HCT116 (cell line): ENCODE measurements at regions of chr17 and their contacts with region 1.

Region 1: GRCh38 chr17:43316522-43317142 is 82.2 kb upstream of the ARL4D start:
- DNase-seq: no peak
- ATAC-seq: no peak
- H3K4me3 ChIP-seq: no peak overlapping the region
- H3K27ac ChIP-seq: no peak overlapping the region
- H3K4me1 ChIP-seq: no peaks in the 10 kb centered on the region; a peak in 3 of 4 replicates
- H3K27me3 ChIP-seq: no peaks in the 10 kb centered on the region
- CTCF ChIP-seq: no peak
- POLR2A ChIP-seq: no peak
- RAD21 ChIP-seq: no peak

Region 2: GRCh38 chr17:43024407-43025289 is 292.0 kb before region 1 on chr17 and contains the start of gene RND2:
- CTCF ChIA-PET with region 1: interaction called, 4 read pairs
- POLR2A ChIA-PET with region 1: interaction called, 30 read pairs
- RAD21 ChIA-PET with region 1: no interaction called
- intact Hi-C with region 1: no loop called
- DNase-seq: peak; percentile 91
- ATAC-seq: peak; percentile 72
- H3K4me3 ChIP-seq: peak within 1 kb of the TSS; percentile 45 to 61
- H3K27ac ChIP-seq: peak within 1 kb of the TSS; percentile 63
- H3K4me1 ChIP-seq: peaks cover 9 to 38% of the 10 kb centered on the region in 2 experiments; a peak in 3 of 4 replicates
- H3K27me3 ChIP-seq: no peaks in the 10 kb centered on the region
- CTCF ChIP-seq: peak in 2 of 3 experiments; percentile 63 to 75; a peak in 5 of 6 replicates
- POLR2A ChIP-seq: no peak
- RAD21 ChIP-seq: peak; percentile 87
- total RNA-seq, gene RND2: 0.66 TPM

Region 3: DNA sequence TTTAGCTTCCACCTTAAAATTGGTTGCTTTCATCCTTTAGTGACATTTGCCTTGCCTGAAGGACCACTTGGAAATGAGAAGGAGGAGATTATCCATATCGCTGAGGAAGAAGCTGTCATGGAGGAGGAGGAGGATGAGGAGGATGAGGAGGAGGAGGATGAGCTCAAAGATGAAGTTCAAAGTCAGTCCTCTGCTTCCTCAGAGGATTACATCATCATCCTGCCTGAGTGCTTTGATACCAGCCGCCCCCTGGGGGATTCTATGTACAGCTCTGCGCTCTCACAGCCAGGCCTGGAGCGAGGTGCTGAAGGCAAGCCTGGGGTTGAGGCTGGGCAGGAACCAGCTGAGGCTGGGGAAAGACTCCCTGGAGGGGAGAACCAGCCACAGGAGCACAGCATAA is 116.5 kb before region 1 on chr17:
- CTCF ChIA-PET with region 1: no interaction called
- POLR2A ChIA-PET with region 1: interaction called, 12 read pairs
- RAD21 ChIA-PET with region 1: no interaction called
- intact Hi-C with region 1: no loop called
- DNase-seq: no peak
- ATAC-seq: no peak
- H3K4me3 ChIP-seq: no peak overlapping the region
- H3K27ac ChIP-seq: no peak overlapping the region
- H3K4me1 ChIP-seq: no peaks in the 10 kb centered on the region
- H3K27me3 ChIP-seq: no peaks in the 10 kb centered on the region
- CTCF ChIP-seq: no peak
- POLR2A ChIP-seq: no peak
- RAD21 ChIP-seq: no peak

Region 4: DNA sequence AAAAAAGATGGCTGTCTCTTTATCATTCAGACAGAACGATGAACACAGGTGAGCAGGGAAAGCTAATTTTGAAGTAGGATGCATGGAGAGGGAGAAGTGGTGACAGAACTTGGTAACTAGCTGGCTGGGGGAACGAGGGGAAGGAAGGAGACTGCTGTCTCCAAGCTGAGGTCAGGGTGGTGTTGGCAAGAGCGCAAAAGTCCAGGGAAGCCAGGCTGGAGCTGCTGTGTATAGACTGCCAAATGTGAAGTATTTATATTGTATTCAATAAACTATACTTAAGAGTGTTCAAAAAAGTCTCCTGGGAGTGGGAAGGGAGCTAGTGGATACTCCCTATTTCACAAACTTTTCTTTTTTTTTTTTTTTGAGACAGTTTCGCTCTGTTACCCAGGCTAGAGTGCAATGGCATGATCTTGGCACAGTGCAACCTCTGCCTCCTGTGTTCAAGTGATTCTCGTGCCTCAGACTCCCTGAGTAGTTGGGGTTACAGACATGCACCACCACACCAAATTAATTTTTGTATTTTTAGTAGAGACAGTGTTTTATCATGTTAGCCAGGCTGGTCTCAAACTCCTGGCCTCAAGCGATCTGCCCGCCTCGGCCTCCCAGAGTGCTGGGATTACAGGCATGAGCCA is 96.8 kb before region 1 on chr17:
- CTCF ChIA-PET with region 1: no interaction called
- POLR2A ChIA-PET with region 1: interaction called, 22 read pairs
- RAD21 ChIA-PET with region 1: no interaction called
- intact Hi-C with region 1: no loop called
- DNase-seq: no peak
- ATAC-seq: no peak
- H3K4me3 ChIP-seq: no peak overlapping the region
- H3K27ac ChIP-seq: no peak overlapping the region
- H3K4me1 ChIP-seq: no peaks in the 10 kb centered on the region
- H3K27me3 ChIP-seq: no peaks in the 10 kb centered on the region
- CTCF ChIP-seq: no peak
- POLR2A ChIP-seq: no peak
- RAD21 ChIP-seq: no peak

Region 5: DNA sequence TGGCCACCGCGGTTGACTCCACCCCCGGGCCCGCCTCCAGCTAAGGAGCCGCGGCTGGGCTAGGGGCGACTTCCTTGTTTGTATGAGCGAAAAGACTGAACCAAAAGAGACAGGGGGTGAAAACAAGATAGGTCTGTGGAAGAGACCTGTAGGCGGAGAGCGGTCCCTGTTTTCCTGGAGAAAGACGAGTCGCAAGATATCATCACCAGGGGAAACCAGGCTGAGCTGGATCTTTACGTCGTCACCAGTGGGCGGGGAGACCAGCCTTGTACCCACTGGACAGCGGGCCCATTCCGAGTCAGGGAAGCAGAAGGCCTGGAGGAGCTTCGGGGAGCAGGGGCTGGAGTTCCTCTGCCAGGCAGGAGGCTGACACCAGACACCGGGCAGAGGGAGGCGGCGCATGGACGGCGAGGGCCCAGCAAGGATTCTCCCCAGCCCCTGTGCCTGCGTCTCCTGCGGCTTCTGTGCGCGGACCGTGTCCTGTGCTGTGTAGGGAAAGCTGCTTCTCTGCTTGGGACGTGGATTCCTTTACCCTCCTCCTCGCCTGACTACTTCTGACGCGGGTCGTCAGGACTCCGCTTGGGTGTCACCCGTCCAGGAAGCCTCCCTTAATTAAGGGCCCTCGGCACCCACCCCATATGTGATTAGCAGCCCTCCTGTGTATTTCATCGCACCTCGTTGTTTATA is 71.9 kb after region 1 on chr17:
- CTCF ChIA-PET with region 1: no interaction called
- POLR2A ChIA-PET with region 1: interaction called, 12 read pairs
- RAD21 ChIA-PET with region 1: no interaction called
- intact Hi-C with region 1: no loop called
- DNase-seq: peak; percentile 86
- ATAC-seq: peak; percentile 86
- H3K4me3 ChIP-seq: peak overlapping the region; percentile 45 to 69
- H3K27ac ChIP-seq: peak overlapping the region; percentile 68
- H3K4me1 ChIP-seq: peaks cover 5 to 25% of the 10 kb centered on the region in 2 experiments; a peak in 3 of 4 replicates
- H3K27me3 ChIP-seq: no peaks in the 10 kb centered on the region
- CTCF ChIP-seq: no peak
- POLR2A ChIP-seq: peak; percentile 62
- RAD21 ChIP-seq: no peak

Region 6: GRCh38 chr17:43517615-43518386 is 201.2 kb after region 1 on chr17:
- CTCF ChIA-PET with region 1: no interaction called
- POLR2A ChIA-PET with region 1: no interaction called
- RAD21 ChIA-PET with region 1: no interaction called
- intact Hi-C with region 1: no loop called
- DNase-seq: no peak
- ATAC-seq: no peak
- H3K4me3 ChIP-seq: no peak overlapping the region
- H3K27ac ChIP-seq: no peak overlapping the region
- H3K4me1 ChIP-seq: no peaks in the 10 kb centered on the region
- H3K27me3 ChIP-seq: no peaks in the 10 kb centered on the region
- CTCF ChIP-seq: no peak
- POLR2A ChIP-seq: no peak
- RAD21 ChIP-seq: no peak